Activated CD4-positive, alpha-beta T cell treated with anti-CD3 and anti-CD28 coated beads, Interleukin-2, amount 10 ng/mL, durations not matched to agents 24 days and 14 days (primary cell): ENCODE measurements at regions of chr9 and their contacts with region 1.

Region 1: GRCh38 chr9:36166101-36166927 is 2.9 kb upstream of the CCIN start:
- DNase-seq: peak; percentile 96
- H3K4me3 Mint-ChIP-seq: peak overlapping the region; percentile 83
- H3K27ac Mint-ChIP-seq: peak overlapping the region; percentile 54
- H3K4me1 Mint-ChIP-seq: peaks cover 10% of the 10 kb centered on the region
- H3K27me3 Mint-ChIP-seq: peaks cover 10% of the 10 kb centered on the region

Region 2: GRCh38 chr9:34723141-34723540 is 1443.2 kb before region 1 on chr9:
- intact Hi-C with region 1: no loop called
- DNase-seq: no peak
- H3K4me3 Mint-ChIP-seq: no peak overlapping the region
- H3K27ac Mint-ChIP-seq: no peak overlapping the region
- H3K4me1 Mint-ChIP-seq: no peaks in the 10 kb centered on the region
- H3K27me3 Mint-ChIP-seq: no peaks in the 10 kb centered on the region

Region 3: GRCh38 chr9:35954942-35955546 is 211.3 kb before region 1 on chr9:
- intact Hi-C with region 1: loop called (anchors 10 kb)
- DNase-seq: peak; percentile 84
- H3K4me3 Mint-ChIP-seq: no peak overlapping the region
- H3K27ac Mint-ChIP-seq: no peak overlapping the region
- H3K4me1 Mint-ChIP-seq: no peaks in the 10 kb centered on the region
- H3K27me3 Mint-ChIP-seq: peaks cover 21% of the 10 kb centered on the region

Region 4: GRCh38 chr9:36036780-36037548 is 129.3 kb before region 1 on chr9 and contains the start of gene RECK:
- intact Hi-C with region 1: loop called (anchors 5 kb)
- DNase-seq: peak; percentile 97
- H3K4me3 Mint-ChIP-seq: peak within 1 kb of the TSS; percentile 97
- H3K27ac Mint-ChIP-seq: peak within 1 kb of the TSS; percentile 89
- H3K4me1 Mint-ChIP-seq: peaks cover 31% of the 10 kb centered on the region
- H3K27me3 Mint-ChIP-seq: peaks cover 15% of the 10 kb centered on the region
- total RNA-seq, gene RECK: 3.9 and 4.3 TPM in 2 replicates

Region 5: GRCh38 chr9:36102742-36103495 is 63.4 kb before region 1 on chr9:
- intact Hi-C with region 1: loop called (anchors 1 kb)
- DNase-seq: peak; percentile 95
- H3K4me3 Mint-ChIP-seq: no peak overlapping the region
- H3K27ac Mint-ChIP-seq: peak overlapping the region; percentile 3
- H3K4me1 Mint-ChIP-seq: peaks cover 12% of the 10 kb centered on the region
- H3K27me3 Mint-ChIP-seq: no peaks in the 10 kb centered on the region

Region 6: DNA sequence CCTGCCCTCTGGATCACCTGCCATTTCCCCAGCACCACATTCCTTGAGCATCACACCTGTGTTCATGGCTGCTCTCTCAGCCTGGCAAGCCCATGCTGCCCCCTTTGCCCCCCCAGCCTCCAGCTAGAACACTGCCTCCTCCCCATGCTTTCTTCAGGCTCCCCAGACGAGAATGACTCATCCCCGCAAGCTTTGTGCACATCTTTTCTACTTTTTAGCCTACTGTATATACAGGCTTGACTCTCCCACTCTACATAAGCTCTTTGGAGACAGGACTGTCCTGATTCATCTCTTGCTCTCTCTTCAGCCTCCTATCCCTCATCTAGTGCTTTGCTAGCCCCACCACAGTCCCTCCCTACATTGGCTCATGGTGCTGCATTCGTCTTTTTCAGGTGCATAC is 49.7 kb before region 1 on chr9:
- intact Hi-C with region 1: no loop called
- DNase-seq: no peak
- H3K4me3 Mint-ChIP-seq: no peak overlapping the region
- H3K27ac Mint-ChIP-seq: no peak overlapping the region
- H3K4me1 Mint-ChIP-seq: no peaks in the 10 kb centered on the region
- H3K27me3 Mint-ChIP-seq: no peaks in the 10 kb centered on the region

Region 7: GRCh38 chr9:36127652-36128244 is 38.6 kb before region 1 on chr9:
- intact Hi-C with region 1: loop called (anchors 5 kb)
- DNase-seq: peak; percentile 55
- H3K4me3 Mint-ChIP-seq: no peak overlapping the region
- H3K27ac Mint-ChIP-seq: no peak overlapping the region
- H3K4me1 Mint-ChIP-seq: peaks cover 15% of the 10 kb centered on the region
- H3K27me3 Mint-ChIP-seq: peaks cover 4% of the 10 kb centered on the region

Region 8: GRCh38 chr9:36136272-36136893 is 29.9 kb before region 1 on chr9 and contains the start of gene GLIPR2:
- intact Hi-C with region 1: loop called (anchors 1 kb)
- DNase-seq: peak; percentile 95
- H3K4me3 Mint-ChIP-seq: peak within 1 kb of the TSS; percentile 88
- H3K27ac Mint-ChIP-seq: peak within 1 kb of the TSS; percentile 77
- H3K4me1 Mint-ChIP-seq: peaks cover 46% of the 10 kb centered on the region
- H3K27me3 Mint-ChIP-seq: peaks cover 19% of the 10 kb centered on the region
- total RNA-seq, gene GLIPR2: 25.5 and 25.7 TPM in 2 replicates